OCI-LY7 (cell line): ENCODE measurements at regions of chr5 and their contacts with region 1.

Region 1: GRCh38 chr5:142548739-142549275 is 137.1 kb downstream of the FGF1 start:
- DNase-seq: peak; percentile 20
- H3K4me3 ChIP-seq: no peak overlapping the region
- H3K27ac ChIP-seq: no peak overlapping the region
- H3K4me1 ChIP-seq: no peaks in the 10 kb centered on the region
- CTCF ChIP-seq: peak; percentile 76

Region 2: GRCh38 chr5:142151436-142152383 is 397.1 kb before region 1 on chr5:
- CTCF ChIA-PET with region 1: interaction called, 3 read pairs
- POLR2A ChIA-PET with region 1: no interaction called
- intact Hi-C with region 1: loop called (anchors 1 kb)
- DNase-seq: peak; percentile 65
- H3K4me3 ChIP-seq: no peak overlapping the region
- H3K27ac ChIP-seq: peak overlapping the region; percentile 38
- H3K4me1 ChIP-seq: peaks cover 9% of the 10 kb centered on the region
- CTCF ChIP-seq: peak; percentile 100

Region 3: GRCh38 chr5:142492781-142493281 is 56.0 kb before region 1 on chr5:
- CTCF ChIA-PET with region 1: no interaction called
- POLR2A ChIA-PET with region 1: no interaction called
- intact Hi-C with region 1: no loop called
- DNase-seq: no peak
- H3K4me3 ChIP-seq: no peak overlapping the region
- H3K27ac ChIP-seq: no peak overlapping the region
- H3K4me1 ChIP-seq: no peaks in the 10 kb centered on the region
- CTCF ChIP-seq: no peak